Colonic mucosa (tissue), 4 donors: ENCODE measurements at regions of chr1 and their contacts with region 1.

Region 1: GRCh38 chr1:24930204-24931145 is at the start of gene RUNX3:
- DNase-seq: peak; percentile 55
- H3K4me3 ChIP-seq: peak within 1 kb of the TSS; percentile 40
- H3K27ac ChIP-seq: peak within 1 kb of the TSS; percentile 65
- H3K4me1 ChIP-seq: peaks cover 17% of the 10 kb centered on the region
- H3K27me3 ChIP-seq: peaks cover 78% of the 10 kb centered on the region
- CTCF ChIP-seq: no peak
- total RNA-seq, gene RUNX3: 1.6 to 3.2 TPM

Region 2: DNA sequence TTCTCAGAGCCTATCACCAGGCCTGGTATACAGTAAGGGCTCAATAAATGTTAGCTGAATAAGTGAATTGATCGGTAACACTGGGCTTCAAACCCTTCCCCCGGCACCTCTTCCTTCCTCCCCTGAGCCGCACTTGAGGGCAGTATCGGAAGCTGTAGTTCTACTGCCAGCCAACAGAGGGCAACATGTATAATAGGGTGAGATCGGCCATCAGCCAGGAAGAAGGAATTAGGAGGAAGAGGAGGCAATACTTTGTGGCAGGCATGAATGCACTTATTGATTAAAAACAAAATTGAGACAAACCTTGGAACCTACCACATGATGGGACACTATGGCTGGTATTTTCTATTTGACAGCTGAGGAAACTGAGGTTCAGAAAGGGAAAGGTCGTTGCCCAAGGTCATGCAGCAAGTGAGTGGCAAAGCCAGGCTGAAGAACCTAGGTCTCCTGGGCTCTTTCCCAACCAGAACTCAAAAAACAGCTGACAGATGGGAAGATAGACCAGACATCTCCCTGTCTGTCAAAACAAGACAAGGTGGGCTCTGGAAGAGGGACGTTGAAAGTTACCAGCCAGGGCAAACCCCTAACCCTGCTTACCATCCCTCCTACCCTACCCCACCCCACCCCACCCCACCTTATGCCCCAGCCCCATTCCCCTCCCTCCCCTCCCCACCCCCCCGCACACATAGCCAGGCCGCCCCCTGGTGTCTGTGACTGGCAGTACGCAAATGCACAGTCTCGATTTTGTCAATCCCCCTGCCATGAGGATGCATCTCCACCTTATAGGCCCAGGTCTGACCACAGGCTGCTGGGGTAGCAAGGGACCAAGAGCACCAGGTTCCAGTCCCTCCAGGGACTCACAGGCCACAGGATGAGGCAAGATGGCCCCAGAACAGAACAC is 106.9 kb after region 1 on chr1:
- intact Hi-C with region 1: loop called (anchors 5 kb)
- DNase-seq: peak; percentile 52
- H3K4me3 ChIP-seq: no peak overlapping the region
- H3K27ac ChIP-seq: no peak overlapping the region
- H3K4me1 ChIP-seq: no peaks in the 10 kb centered on the region
- H3K27me3 ChIP-seq: no peaks in the 10 kb centered on the region
- CTCF ChIP-seq: peak; percentile 62

Region 3: DNA sequence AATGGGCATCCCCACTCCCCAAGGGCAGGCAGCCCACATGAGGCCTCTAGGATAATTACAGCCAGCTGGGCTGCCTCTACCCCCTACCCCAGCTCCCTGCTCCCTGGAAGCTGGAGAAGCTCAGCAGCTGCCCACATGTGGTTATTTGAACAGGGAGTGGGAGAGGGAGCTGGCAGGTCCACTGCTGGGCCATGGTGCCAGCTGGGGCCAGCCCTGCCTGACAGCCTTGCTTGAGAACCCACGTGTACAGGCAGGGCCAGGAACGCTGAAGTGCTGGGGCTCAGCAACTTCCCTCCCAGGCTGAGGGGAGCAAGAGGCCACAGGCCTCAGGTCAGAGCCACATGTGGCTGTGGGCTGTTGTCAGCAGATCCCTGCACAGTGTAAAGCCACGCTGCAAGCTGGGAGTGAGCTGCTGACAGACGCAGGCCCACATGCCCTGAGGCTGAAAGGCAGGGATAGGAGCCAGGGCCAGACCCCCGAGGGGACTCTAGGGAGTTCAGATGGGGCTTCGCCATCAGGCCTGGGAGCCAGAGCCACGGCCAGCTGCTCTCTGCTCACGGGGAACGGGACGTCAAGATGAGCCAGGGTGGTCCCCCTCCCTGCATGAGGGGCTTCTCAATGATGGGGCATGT is 172.8 kb after region 1 on chr1:
- intact Hi-C with region 1: loop called (anchors 5 kb)
- DNase-seq: no peak
- H3K4me3 ChIP-seq: no peak overlapping the region
- H3K27ac ChIP-seq: no peak overlapping the region
- H3K4me1 ChIP-seq: no peaks in the 10 kb centered on the region
- H3K27me3 ChIP-seq: no peaks in the 10 kb centered on the region
- CTCF ChIP-seq: no peak

Region 4: DNA sequence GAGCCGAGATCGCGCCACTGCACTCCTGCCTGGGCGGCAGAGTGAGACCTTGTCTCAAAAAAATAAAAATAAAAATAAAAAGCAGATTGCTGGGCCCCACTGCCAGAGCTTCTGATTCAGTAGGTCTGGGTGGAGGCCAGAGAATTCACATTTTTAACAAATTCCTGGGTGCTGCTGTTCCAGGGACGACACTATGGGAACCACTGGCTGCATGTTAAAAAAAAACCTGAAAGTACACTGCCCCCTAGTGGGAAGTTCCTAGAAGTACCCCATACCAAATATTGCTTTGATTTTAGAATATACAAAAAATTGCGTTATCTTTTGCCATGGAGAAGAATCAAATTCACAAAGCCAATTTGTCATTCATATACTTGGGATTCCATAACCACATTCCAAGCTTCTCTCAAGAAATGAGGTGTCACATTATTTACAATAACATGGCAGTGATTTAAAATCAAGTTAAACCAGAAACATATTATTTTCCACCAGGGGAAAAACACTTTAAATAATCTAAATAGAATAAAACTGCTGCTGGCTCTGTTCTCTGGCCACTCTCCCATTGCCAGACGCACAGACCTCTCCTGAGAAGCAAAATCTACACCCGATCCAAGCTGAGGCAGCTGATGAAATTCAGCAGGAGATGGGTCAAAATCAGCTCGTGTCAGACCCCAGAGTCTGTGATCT is 274.5 kb after region 1 on chr1:
- intact Hi-C with region 1: loop called (anchors 5 kb)
- DNase-seq: no peak
- H3K4me3 ChIP-seq: no peak overlapping the region
- H3K27ac ChIP-seq: no peak overlapping the region
- H3K4me1 ChIP-seq: no peaks in the 10 kb centered on the region
- H3K27me3 ChIP-seq: no peaks in the 10 kb centered on the region
- CTCF ChIP-seq: peak; percentile 79